HCT116 (cell line): ENCODE measurements at regions of chr22 and their contacts with region 1.

Region 1: GRCh38 chr22:24156913-24157821 is 24.1 kb upstream of the SUSD2 start:
- DNase-seq: peak; percentile 67
- ATAC-seq: peak; percentile 89
- H3K4me3 ChIP-seq: peak overlapping the region; percentile 55 to 69
- H3K27ac ChIP-seq: peak overlapping the region; percentile 86
- H3K4me1 ChIP-seq: peaks cover 18 to 31% of the 10 kb centered on the region in 2 experiments
- H3K27me3 ChIP-seq: no peaks in the 10 kb centered on the region
- CTCF ChIP-seq: peak; percentile 57 to 93 (median 91); a peak in 5 of 6 replicates
- POLR2A ChIP-seq: no peak
- RAD21 ChIP-seq: no peak

Region 2: DNA sequence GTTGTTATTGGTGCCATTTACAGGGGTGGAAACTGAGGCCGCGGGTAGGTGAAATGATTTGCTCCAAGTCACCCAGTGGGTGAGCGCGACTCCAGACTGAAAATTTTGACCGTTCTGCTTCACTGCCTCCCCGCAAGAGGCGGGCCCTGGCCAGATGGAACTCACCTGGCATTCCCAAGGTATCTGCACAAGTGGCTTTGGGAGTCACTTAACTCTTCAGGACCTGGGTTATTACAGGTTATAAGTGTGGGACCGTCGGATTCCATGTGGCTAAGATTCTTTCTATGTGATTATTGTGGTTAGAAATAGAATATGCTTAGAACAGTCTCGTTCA is 145.5 kb before region 1 on chr22:
- CTCF ChIA-PET with region 1: interaction called, 3 read pairs
- POLR2A ChIA-PET with region 1: no interaction called
- RAD21 ChIA-PET with region 1: no interaction called
- intact Hi-C with region 1: loop called (anchors 10 kb)
- DNase-seq: no peak
- ATAC-seq: peak; percentile 26
- H3K4me3 ChIP-seq: peak overlapping the region; percentile 97 to 98
- H3K27ac ChIP-seq: peak overlapping the region; percentile 72
- H3K4me1 ChIP-seq: peaks cover 6 to 8% of the 10 kb centered on the region in 2 experiments; a peak in 3 of 4 replicates
- H3K27me3 ChIP-seq: no peaks in the 10 kb centered on the region
- CTCF ChIP-seq: no peak
- POLR2A ChIP-seq: no peak
- RAD21 ChIP-seq: no peak

Region 3: GRCh38 chr22:24189249-24190158 is 32.3 kb after region 1 on chr22:
- CTCF ChIA-PET with region 1: no interaction called
- POLR2A ChIA-PET with region 1: no interaction called
- RAD21 ChIA-PET with region 1: no interaction called
- intact Hi-C with region 1: no loop called
- DNase-seq: no peak
- ATAC-seq: peak; percentile 93
- H3K4me3 ChIP-seq: no peak overlapping the region
- H3K27ac ChIP-seq: peak overlapping the region; percentile 74
- H3K4me1 ChIP-seq: peaks cover 35 to 36% of the 10 kb centered on the region in 2 experiments
- H3K27me3 ChIP-seq: no peaks in the 10 kb centered on the region
- CTCF ChIP-seq: peak; percentile 90 to 96 (median 94)
- POLR2A ChIP-seq: no peak
- RAD21 ChIP-seq: peak; percentile 100